T-cell (primary cell): ENCODE measurements at regions of chr1 and their contacts with region 1.

Region 1: GRCh38 chr1:67685067-67685557 is at the start of gene GADD45A:
- DNase-seq: peak; percentile 79 to 97 (median 93)
- ATAC-seq: peak; percentile 89 to 91 (median 90)
- H3K4me3 ChIP-seq: peak within 1 kb of the TSS; percentile 80 to 84
- H3K4me3 Mint-ChIP-seq: peak within 1 kb of the TSS; percentile 86 to 93 (median 92)
- H3K27ac ChIP-seq: peak within 1 kb of the TSS; percentile 51
- H3K27ac Mint-ChIP-seq: peak within 1 kb of the TSS; percentile 82 to 90
- H3K4me1 ChIP-seq: peaks cover 4 to 14% of the 10 kb centered on the region in 2 experiments
- H3K4me1 Mint-ChIP-seq: peaks cover 29 to 34% (median 31%) of the 10 kb centered on the region in 3 donors
- H3K27me3 ChIP-seq: no peaks in the 10 kb centered on the region
- H3K27me3 Mint-ChIP-seq: no peaks in the 10 kb centered on the region
- total RNA-seq, gene GADD45A: 16.0 to 85.8 (median 21.9) TPM

Region 2: GRCh38 chr1:66924756-66925557 is 760.2 kb before region 1 on chr1 and contains the starts of genes DNAI4 and MIER1:
- CTCF ChIA-PET with region 1: no interaction called
- POLR2A ChIA-PET with region 1: interaction called in 1 of 2 experiments, 11 read pairs
- DNase-seq: peak; percentile 88 to 97 (median 95)
- ATAC-seq: peak; percentile 92 to 96 (median 95)
- H3K4me3 ChIP-seq: peak within 1 kb of the TSS; percentile 89 to 92
- H3K4me3 Mint-ChIP-seq: peak within 1 kb of the TSS; percentile 94 to 96 (median 94)
- H3K27ac ChIP-seq: peak within 1 kb of the TSS; percentile 97
- H3K27ac Mint-ChIP-seq: peak within 1 kb of the TSS; percentile 94 to 96
- H3K4me1 ChIP-seq: peaks cover 23 to 27% of the 10 kb centered on the region in 2 experiments
- H3K4me1 Mint-ChIP-seq: peaks cover 53 to 56% (median 54%) of the 10 kb centered on the region in 3 donors
- H3K27me3 ChIP-seq: no peaks in the 10 kb centered on the region
- H3K27me3 Mint-ChIP-seq: no peaks in the 10 kb centered on the region
- total RNA-seq, gene DNAI4: 5.6 to 11.7 (median 7.7) TPM
- total RNA-seq, gene MIER1: 55.3 to 77.1 (median 58.1) TPM

Region 3: DNA sequence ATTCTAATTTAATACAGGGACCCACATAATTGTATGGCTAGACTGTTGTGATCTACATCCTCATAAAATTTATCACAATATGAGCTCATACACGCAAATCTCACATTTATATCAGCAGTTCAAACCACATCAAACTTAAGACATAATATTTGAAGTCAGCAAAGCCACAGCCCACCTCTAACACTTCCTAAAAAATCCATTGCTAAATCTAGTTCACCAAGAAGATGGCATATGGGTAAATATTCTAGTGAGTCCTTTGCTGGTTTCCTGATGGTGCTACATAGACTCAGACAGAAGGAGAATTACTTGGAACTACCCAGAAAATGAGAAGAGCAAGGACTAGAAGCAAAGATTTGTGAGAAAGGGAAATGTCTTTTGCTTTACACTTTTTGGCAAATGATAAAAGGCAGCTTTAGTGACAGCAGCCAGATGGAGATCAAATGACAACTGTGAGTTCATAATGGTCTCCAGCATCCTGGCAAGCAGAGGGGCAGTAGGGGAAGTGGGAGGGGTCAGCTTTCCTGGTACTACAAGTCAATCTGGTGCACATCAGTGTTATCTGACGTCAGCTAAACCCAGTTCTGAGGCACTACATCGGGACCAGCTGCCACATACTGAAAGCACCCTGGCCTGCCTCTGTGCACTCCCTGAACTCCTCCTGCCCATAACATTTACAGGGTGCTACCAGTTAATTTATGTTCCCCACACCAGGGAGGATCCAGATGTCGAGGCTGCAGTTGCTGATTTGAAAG is 10.7 kb before region 1 on chr1:
- CTCF ChIA-PET with region 1: interaction called, 6 to 17 read pairs
- POLR2A ChIA-PET with region 1: interaction called, 18 to 23 read pairs
- DNase-seq: peak; percentile 5 to 85 (median 67)
- ATAC-seq: peak; percentile 69 to 88 (median 80)
- H3K4me3 ChIP-seq: no peak overlapping the region
- H3K4me3 Mint-ChIP-seq: peak overlapping the region; percentile 0 to 38 (median 37)
- H3K27ac ChIP-seq: peak overlapping the region; percentile 26
- H3K27ac Mint-ChIP-seq: peak overlapping the region; percentile 51 to 76
- H3K4me1 ChIP-seq: peaks cover 11 to 18% of the 10 kb centered on the region in 2 experiments
- H3K4me1 Mint-ChIP-seq: peaks cover 20 to 26% (median 23%) of the 10 kb centered on the region in 3 donors
- H3K27me3 ChIP-seq: no peaks in the 10 kb centered on the region
- H3K27me3 Mint-ChIP-seq: peaks cover 7 to 9% of the 10 kb centered on the region in 2 donors